GM13976 (cell line): ENCODE measurements at regions of chrX and their contacts with region 1.

Region 1: DNA sequence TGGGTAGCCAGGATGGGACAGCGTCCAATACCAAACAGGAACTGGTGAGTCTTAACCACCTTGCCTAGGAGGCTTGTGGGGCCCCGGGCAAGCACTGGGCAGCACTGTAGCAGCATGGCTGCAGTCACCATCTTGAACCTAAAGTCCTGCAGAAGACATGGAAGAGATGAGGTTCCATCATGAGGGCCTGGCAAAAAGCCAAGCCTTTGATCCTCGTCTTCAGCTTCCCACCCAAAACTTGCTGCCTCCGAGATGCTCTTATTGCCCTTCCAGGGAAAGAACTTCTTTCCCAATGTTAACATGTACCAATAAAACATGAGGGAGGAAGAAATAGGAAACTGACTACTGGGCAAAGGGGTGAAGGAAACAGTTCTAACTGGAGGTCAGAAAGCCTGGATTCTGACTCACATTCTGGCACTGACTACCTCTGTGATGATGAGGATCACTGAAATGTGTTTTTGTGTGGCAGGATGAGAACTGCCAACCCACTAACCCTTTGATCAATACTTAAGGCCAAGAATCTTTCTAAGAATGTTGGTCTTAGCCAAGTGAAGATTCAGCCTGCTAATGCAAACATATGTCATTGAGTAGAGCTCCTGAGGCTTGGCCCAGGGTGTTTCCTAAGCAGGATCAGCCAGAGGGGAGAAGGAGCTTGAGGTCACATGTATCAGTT is 4.8 kb downstream of the ALAS2 start:
- DNase-seq: no peak
- CTCF ChIP-seq: no peak

Region 2: DNA sequence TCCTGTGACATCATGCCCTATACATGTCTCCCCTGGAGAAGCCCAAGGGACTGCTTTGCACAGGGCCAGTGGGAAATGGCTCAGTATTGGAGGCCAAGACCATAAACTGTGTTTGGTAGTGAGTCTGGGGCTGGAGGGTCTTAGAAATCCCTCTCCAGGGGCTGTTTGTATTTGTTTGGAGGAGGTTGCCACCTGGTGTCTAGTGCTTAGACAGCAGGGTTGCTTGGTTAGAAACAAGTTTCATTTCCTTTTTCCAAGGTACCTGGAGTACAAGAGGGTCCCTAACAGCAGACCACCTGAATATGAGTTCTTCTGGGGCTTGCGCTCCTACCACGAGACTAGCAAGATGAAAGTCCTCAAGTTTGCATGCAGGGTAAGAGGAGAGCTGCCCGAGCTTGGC is 98.6 kb before region 1 on chrX:
- in situ Hi-C with region 1: loop called (anchors 25 kb)
- DNase-seq: no peak
- CTCF ChIP-seq: no peak

Region 3: GRCh38 chrX:55695227-55696018 is 669.4 kb after region 1 on chrX:
- in situ Hi-C with region 1: no loop called
- DNase-seq: no peak
- CTCF ChIP-seq: no peak